ENCODE measurements at regions of chr3 and their contacts with region 1.

Region 1: DNA sequence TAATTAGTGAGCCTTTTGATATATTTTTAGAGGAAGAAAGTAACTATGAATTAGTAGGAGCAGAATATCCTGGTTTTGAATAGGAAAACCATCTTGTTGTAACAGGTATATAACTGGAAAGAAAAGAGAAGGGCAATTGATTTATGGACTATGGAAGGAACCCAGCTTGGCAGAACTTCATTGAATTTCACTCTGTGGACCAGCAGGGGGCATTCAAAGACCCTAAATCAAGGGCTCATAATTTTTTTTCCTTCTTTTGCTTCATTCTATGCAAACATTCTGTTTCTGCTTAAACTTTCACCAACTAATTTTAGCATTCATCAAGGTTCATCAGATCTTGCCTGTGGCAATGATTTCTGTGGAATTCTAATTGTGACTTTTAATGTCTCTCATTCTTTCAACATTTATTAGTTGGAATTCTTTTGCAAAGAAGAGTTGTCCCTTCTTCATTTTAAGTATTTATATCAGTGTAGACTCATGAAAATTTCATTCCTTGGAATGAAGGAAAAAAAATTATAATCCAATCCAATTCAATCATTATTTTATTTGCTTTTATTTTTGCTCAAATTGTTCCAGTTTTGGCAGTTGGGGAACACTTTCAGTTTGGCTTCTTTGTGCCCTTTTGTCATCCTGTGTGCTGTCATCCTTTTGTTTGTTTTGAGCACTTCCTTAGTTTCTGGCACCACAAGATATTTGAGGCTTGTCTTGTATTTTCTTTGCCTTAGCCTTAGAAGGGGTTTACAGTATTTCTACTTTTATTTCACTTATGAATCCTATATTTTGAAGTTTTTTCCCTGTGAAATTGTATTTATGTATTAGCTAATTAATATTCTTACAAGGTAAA is 30.4 kb downstream of the NXPE3 start:
- DNase-seq: peak in 1 of 2 experiments; percentile 28
- H3K4me3 ChIP-seq: no peak overlapping the region
- H3K27ac ChIP-seq: no peak overlapping the region
- H3K4me1 ChIP-seq: peaks cover 10% of the 10 kb centered on the region
- H3K27me3 ChIP-seq: no peaks in the 10 kb centered on the region
- CTCF ChIP-seq: peak; percentile 94

Region 2: GRCh38 chr3:100009276-100010086 is 1799.9 kb before region 1 on chr3:
- CTCF ChIA-PET with region 1: no interaction called
- POLR2A ChIA-PET with region 1: no interaction called
- intact Hi-C with region 1: no loop called
- DNase-seq: no peak
- H3K4me3 ChIP-seq: no peak overlapping the region
- H3K27ac ChIP-seq: no peak overlapping the region
- H3K4me1 ChIP-seq: peaks cover 25% of the 10 kb centered on the region
- H3K27me3 ChIP-seq: no peaks in the 10 kb centered on the region
- CTCF ChIP-seq: no peak

Region 3: GRCh38 chr3:101656651-101657050 is 152.7 kb before region 1 on chr3:
- CTCF ChIA-PET with region 1: no interaction called
- POLR2A ChIA-PET with region 1: no interaction called
- intact Hi-C with region 1: no loop called
- DNase-seq: no peak
- H3K4me3 ChIP-seq: no peak overlapping the region
- H3K27ac ChIP-seq: no peak overlapping the region
- H3K4me1 ChIP-seq: no peaks in the 10 kb centered on the region
- H3K27me3 ChIP-seq: no peaks in the 10 kb centered on the region
- CTCF ChIP-seq: no peak

Region 4: DNA sequence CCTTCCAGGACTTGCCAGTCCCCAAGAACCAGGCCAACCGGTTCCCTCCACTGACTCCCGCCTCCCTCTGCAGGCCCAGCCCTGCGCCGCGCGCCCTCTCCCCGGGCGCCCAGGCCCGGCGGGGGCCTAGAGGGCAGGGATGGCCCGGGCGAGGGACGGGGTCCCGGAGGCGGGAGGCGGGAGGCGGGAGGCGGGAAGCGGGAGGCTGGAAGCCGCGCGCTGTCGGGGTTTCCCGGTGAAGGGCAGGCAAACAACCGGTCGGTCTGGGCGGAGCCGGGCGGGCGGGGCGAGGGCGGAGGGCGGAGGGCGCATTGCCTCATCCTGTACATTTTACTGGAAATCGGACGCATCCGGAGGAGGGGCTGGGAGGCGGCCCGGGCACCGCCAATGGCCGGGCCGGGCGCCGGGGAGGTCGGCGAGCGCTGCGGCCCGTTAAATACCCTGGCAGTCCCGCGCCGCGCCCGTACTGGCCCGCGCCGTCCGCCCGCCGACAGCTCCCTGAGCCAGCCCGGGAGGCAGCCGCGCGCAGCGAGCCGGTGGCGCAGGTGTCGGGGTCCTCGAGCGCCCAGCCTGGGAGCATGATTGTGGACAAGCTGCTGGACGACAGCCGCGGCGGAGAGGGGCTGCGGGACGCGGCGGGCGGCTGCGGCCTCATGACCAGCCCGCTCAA is 39.8 kb after region 1 on chr3 and contains the start of gene NFKBIZ:
- CTCF ChIA-PET with region 1: no interaction called
- POLR2A ChIA-PET with region 1: interaction called, 11 read pairs
- intact Hi-C with region 1: no loop called
- DNase-seq: peak; percentile 91 to 99
- H3K4me3 ChIP-seq: peak within 1 kb of the TSS; percentile 88
- H3K27ac ChIP-seq: peak within 1 kb of the TSS; percentile 80
- H3K4me1 ChIP-seq: peaks cover 24% of the 10 kb centered on the region
- H3K27me3 ChIP-seq: no peaks in the 10 kb centered on the region
- CTCF ChIP-seq: no peak
- total RNA-seq, gene NFKBIZ: 44.9 and 57.7 TPM in 2 replicates

Region 5: GRCh38 chr3:101876142-101876541 is 66.7 kb after region 1 on chr3:
- CTCF ChIA-PET with region 1: no interaction called
- POLR2A ChIA-PET with region 1: no interaction called
- intact Hi-C with region 1: no loop called
- DNase-seq: no peak
- H3K4me3 ChIP-seq: no peak overlapping the region
- H3K27ac ChIP-seq: no peak overlapping the region
- H3K4me1 ChIP-seq: no peaks in the 10 kb centered on the region
- H3K27me3 ChIP-seq: no peaks in the 10 kb centered on the region
- CTCF ChIP-seq: no peak

Region 6: GRCh38 chr3:101936419-101937356 is 127.3 kb after region 1 on chr3:
- CTCF ChIA-PET with region 1: no interaction called
- POLR2A ChIA-PET with region 1: no interaction called
- intact Hi-C with region 1: loop called (anchors 5 kb)
- DNase-seq: peak in 1 of 2 experiments; percentile 77
- H3K4me3 ChIP-seq: no peak overlapping the region
- H3K27ac ChIP-seq: peak overlapping the region; percentile 75
- H3K4me1 ChIP-seq: peaks cover 16% of the 10 kb centered on the region
- H3K27me3 ChIP-seq: no peaks in the 10 kb centered on the region
- CTCF ChIP-seq: no peak

Region 7: GRCh38 chr3:102078854-102079253 is 269.5 kb after region 1 on chr3:
- CTCF ChIA-PET with region 1: no interaction called
- POLR2A ChIA-PET with region 1: no interaction called
- intact Hi-C with region 1: loop called (anchors 5 kb)
- DNase-seq: peak in 1 of 2 experiments; percentile 27
- H3K4me3 ChIP-seq: 0 out of 2 replicates have a peak overlapping the region, but pooled peaks have one; percentile 3
- H3K27ac ChIP-seq: peak overlapping the region; percentile 39
- H3K4me1 ChIP-seq: peaks cover 20% of the 10 kb centered on the region
- H3K27me3 ChIP-seq: no peaks in the 10 kb centered on the region
- CTCF ChIP-seq: no peak

Region 8: DNA sequence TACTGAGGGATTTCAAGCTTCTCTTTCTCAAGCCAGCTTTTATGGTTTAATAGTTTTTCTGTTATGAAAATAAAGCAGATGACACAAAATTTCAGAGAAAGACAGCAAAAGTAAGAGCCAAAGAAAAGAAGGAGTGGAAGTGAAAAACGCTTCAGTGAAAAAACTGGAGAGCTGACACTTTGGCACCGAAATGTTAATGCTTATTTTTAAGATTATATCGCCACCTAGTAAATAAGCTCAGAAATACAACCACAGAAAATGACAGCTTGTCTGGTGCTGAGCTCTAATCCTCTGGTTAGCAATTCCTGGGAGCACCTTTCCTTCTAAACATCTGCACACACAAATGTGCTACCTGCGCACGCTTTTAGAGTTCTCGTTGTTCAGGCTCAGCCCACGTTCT is 727.1 kb after region 1 on chr3:
- CTCF ChIA-PET with region 1: interaction called, 5 read pairs
- POLR2A ChIA-PET with region 1: no interaction called
- intact Hi-C with region 1: loop called (anchors 1 kb)
- DNase-seq: peak in 1 of 2 experiments; percentile 50
- H3K4me3 ChIP-seq: no peak overlapping the region; the same call in 1 of the 2 replicates
- H3K27ac ChIP-seq: no peak overlapping the region
- H3K4me1 ChIP-seq: peaks cover 9% of the 10 kb centered on the region; the same call in 1 of the 2 replicates
- H3K27me3 ChIP-seq: no peaks in the 10 kb centered on the region
- CTCF ChIP-seq: peak; percentile 78